ENCODE measurements at regions of chr6 and their contacts with region 1.

Region 1: DNA sequence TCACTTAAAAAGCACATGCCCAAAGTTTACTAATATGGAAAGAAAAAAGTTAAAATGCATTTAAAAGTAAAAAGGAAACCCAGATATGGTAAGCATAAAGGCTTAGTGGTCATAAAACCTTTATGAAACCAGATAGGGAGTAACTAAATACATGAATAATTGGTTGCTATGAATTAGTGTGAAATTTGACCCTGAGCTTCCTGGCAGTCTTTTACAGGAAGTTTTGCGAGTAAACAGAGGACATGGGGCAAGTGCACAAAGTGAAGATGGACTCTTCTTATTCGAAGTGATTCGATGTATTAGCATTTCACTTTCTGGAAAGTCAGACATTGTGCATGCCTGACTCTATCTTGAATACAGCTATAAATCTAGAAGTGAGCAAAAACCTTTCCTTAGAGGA is 90.9 kb upstream of the MLIP start:
- DNase-seq: no peak
- ATAC-seq: no peak
- H3K4me3 ChIP-seq: no peak overlapping the region
- H3K4me3 Mint-ChIP-seq: no peak overlapping the region
- H3K27ac ChIP-seq: no peak overlapping the region
- H3K27ac Mint-ChIP-seq: no peak overlapping the region
- H3K4me1 ChIP-seq: no peaks in the 10 kb centered on the region
- H3K4me1 Mint-ChIP-seq: no peaks in the 10 kb centered on the region
- H3K27me3 ChIP-seq: no peaks in the 10 kb centered on the region
- H3K27me3 Mint-ChIP-seq: no peaks in the 10 kb centered on the region
- CTCF ChIP-seq: no peak

Region 2: DNA sequence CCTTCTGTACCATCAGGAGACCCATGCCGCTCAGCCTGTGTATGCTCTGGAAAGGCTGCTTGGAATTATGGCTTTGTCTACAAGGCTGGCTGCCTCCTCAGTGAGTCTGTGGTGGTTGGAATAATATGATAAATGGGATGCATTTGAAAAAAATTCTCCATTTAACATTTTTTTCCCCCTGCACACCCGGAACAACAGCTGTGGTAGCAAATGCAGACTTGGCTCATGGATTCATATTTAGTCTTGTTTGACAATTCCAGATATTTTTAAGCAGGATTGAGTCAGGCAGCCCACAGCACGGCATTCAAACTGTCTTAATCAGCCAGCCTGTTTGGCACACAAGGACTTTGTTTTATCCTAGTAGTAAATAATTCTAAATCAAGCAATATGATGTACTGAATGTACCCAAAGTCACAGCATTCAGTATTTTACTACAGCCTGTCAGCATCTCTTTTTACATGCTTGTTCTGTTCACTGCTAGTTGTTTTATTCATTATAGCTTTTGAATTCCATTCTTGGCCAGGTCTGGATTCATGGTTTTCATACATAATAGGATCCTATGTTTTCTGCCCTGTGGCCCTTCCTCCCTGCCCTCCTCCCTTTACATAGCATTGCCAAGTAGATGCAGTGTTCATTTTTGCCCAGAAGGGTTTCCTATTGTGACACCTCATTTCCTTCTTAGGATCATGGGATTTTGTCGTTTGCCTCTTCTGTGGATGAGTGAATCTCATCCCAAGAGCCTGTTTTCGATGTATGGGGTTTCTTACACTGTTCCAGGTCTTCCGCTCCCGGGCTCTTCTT is 157.5 kb before region 1 on chr6:
- CTCF ChIA-PET with region 1: no interaction called
- POLR2A ChIA-PET with region 1: no interaction called
- intact Hi-C with region 1: no loop called
- DNase-seq: no peak
- ATAC-seq: no peak
- H3K4me3 ChIP-seq: no peak overlapping the region
- H3K4me3 Mint-ChIP-seq: no peak overlapping the region
- H3K27ac ChIP-seq: no peak overlapping the region
- H3K27ac Mint-ChIP-seq: no peak overlapping the region
- H3K4me1 ChIP-seq: no peaks in the 10 kb centered on the region
- H3K4me1 Mint-ChIP-seq: no peaks in the 10 kb centered on the region
- H3K27me3 ChIP-seq: no peaks in the 10 kb centered on the region
- H3K27me3 Mint-ChIP-seq: no peaks in the 10 kb centered on the region
- CTCF ChIP-seq: no peak

Region 3: GRCh38 chr6:53926525-53926924 is 93.8 kb before region 1 on chr6:
- CTCF ChIA-PET with region 1: no interaction called
- POLR2A ChIA-PET with region 1: no interaction called
- intact Hi-C with region 1: no loop called
- DNase-seq: no peak
- ATAC-seq: no peak
- H3K4me3 ChIP-seq: no peak overlapping the region
- H3K4me3 Mint-ChIP-seq: no peak overlapping the region
- H3K27ac ChIP-seq: no peak overlapping the region
- H3K27ac Mint-ChIP-seq: no peak overlapping the region
- H3K4me1 ChIP-seq: no peaks in the 10 kb centered on the region
- H3K4me1 Mint-ChIP-seq: no peaks in the 10 kb centered on the region
- H3K27me3 ChIP-seq: no peaks in the 10 kb centered on the region
- H3K27me3 Mint-ChIP-seq: no peaks in the 10 kb centered on the region
- CTCF ChIP-seq: no peak

Region 4: DNA sequence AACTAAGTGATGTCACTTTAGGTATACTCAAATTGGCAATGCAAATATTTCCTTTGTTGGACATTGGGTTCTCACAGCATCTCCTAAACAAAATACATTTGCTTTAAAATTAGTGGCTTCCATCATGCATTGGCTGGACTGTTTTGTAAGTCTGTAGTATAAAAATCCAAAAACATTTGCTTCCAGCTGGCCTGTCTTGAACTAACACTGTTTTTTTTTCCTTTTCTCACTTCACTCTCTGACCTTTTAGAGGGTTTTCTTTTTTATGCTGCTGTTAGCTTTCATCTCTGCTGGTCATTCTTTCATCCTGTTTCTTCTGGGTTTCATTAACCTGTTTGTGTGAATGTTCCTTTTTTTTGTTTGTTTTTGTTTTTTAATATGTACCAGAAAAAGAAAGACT is 30.8 kb before region 1 on chr6:
- CTCF ChIA-PET with region 1: no interaction called
- POLR2A ChIA-PET with region 1: no interaction called
- intact Hi-C with region 1: loop called in 1 of 2 experiments (anchors 1 kb)
- DNase-seq: no peak
- ATAC-seq: no peak
- H3K4me3 ChIP-seq: no peak overlapping the region
- H3K4me3 Mint-ChIP-seq: no peak overlapping the region
- H3K27ac ChIP-seq: no peak overlapping the region
- H3K27ac Mint-ChIP-seq: no peak overlapping the region
- H3K4me1 ChIP-seq: no peaks in the 10 kb centered on the region
- H3K4me1 Mint-ChIP-seq: no peaks in the 10 kb centered on the region
- H3K27me3 ChIP-seq: no peaks in the 10 kb centered on the region
- H3K27me3 Mint-ChIP-seq: peaks cover 25% of the 10 kb centered on the region
- CTCF ChIP-seq: no peak

Region 5: GRCh38 chr6:55456016-55456415 is 1435.7 kb after region 1 on chr6:
- CTCF ChIA-PET with region 1: no interaction called
- POLR2A ChIA-PET with region 1: no interaction called
- intact Hi-C with region 1: no loop called
- DNase-seq: no peak
- ATAC-seq: no peak
- H3K4me3 ChIP-seq: no peak overlapping the region
- H3K4me3 Mint-ChIP-seq: no peak overlapping the region
- H3K27ac ChIP-seq: no peak overlapping the region
- H3K27ac Mint-ChIP-seq: no peak overlapping the region
- H3K4me1 ChIP-seq: no peaks in the 10 kb centered on the region
- H3K4me1 Mint-ChIP-seq: no peaks in the 10 kb centered on the region
- H3K27me3 ChIP-seq: no peaks in the 10 kb centered on the region
- H3K27me3 Mint-ChIP-seq: no peaks in the 10 kb centered on the region
- CTCF ChIP-seq: no peak